ENCODE measurements at regions of chr5 and their contacts with region 1.

Region 1: DNA sequence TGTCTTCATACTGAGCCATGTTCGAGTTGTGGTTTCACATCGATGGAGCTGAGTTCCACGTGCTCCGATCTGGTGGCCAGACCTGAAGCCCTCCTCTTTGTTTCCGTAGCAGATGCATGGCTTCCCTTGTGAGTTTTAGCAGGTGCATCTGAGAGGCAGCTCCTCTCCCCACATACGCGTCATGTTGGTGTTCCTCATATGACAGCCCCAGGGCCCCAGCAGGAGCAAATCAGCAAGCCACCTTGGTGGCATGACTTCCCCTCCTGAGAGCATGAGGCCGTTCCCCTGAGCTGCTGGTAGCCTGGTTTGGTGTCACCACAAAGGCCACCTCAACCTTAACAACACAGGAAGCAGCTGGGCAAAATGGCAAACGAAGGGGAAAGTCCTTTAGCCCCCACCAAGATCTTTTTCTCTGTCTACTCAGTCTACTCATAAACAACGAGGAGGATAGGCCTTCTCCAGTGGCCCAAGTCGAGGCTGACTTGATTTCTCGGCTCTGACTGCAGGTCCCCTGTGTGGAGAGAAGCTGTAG is 5.9 kb downstream of the CYFIP2 start:
- DNase-seq: peak; percentile 94
- H3K4me3 Mint-ChIP-seq: peak overlapping the region; percentile 69
- H3K27ac Mint-ChIP-seq: peak overlapping the region; percentile 97
- H3K4me1 Mint-ChIP-seq: peaks cover 86% of the 10 kb centered on the region
- H3K27me3 Mint-ChIP-seq: no peaks in the 10 kb centered on the region

Region 2: DNA sequence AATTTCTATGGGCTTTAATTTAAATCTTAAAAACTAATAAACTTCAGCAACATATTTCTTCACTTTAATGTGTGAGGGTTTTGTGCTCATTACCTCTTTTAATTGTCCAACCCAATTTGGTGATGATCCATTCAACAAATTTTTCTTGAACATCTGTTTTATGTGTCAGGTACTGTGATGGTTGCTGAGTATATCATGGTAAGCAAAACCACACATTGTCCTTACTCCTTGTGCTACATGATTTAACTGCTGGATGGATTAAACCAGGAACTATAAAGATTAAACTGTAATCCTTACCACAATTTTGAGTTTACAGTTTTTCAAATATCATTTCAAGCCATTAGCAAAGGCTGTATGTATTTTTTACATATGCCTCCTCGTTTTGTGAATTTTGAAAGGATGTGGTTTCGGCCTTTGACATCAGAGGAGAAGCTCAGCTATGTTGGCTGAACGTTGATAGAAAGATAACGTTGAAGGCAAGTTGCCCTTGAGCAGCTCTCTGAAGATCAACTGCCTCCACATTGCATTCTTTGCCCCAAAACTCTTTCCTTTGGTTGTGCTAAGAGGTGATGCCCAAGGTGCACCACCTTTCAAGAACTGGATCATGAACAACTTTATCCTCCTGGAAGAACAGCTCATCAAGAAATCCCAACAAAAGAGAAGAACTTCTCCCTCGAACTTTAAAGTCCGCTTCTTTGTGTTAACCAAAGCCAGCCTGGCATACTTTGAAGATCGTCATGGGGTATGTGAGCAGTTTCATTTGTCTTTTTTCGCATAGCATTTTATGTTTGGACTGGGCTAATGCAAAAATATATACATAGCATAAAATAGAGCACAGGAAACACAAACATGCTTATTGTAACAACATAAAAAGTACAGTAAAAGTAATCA is 91.2 kb before region 1 on chr5 and contains the start of gene ITK:
- CTCF ChIA-PET with region 1: no interaction called
- POLR2A ChIA-PET with region 1: interaction called, 25 read pairs
- intact Hi-C with region 1: no loop called
- DNase-seq: peak; percentile 58
- H3K4me3 Mint-ChIP-seq: peak within 1 kb of the TSS; percentile 99
- H3K27ac Mint-ChIP-seq: peak within 1 kb of the TSS; percentile 100
- H3K4me1 Mint-ChIP-seq: peaks cover 45% of the 10 kb centered on the region
- H3K27me3 Mint-ChIP-seq: no peaks in the 10 kb centered on the region
- total RNA-seq, gene ITK: 236 to 240 TPM

Region 3: DNA sequence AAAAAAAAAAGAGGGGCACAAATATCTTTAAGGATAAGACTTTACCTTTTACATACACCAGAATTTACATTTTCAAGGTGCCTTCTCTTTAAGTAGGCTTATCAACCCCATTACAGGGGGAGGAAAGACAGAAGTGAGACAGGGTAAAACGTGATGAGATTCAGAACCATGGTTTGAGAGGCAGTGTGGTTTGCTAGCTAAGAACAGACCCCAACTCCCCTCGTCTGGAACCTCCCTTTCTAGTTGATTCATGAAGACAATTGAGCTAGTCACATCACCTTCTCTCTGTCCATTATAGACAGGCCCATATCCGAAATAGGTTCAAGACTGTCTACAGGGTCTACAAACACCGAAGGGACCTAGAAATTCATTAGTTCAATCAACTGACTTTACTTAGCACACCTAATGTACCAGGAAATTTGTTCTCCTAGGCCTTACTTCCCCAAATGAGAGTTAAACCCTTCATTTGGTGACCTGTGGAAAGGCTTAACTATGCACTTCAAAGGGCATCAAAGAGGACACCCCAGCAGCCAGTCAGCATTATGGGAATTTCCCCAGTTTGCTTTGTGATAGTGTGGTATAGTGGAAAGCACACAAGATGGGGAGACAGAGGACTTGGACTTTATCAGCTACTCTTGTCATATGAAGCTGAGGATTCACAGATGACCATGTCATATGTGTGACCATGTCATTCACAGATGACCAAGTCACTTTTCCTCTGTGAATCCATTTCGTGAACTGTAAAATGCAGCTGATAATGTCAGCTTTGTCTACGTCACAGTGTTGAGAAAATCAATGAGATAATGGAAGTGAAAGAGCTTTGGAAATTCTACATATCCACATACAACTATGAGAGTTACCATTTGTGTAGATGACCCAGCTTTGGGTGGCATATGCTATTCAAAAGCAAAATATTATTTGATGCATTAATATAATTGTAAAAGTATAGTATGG is 46.1 kb before region 1 on chr5:
- CTCF ChIA-PET with region 1: no interaction called
- POLR2A ChIA-PET with region 1: interaction called, 14 read pairs
- intact Hi-C with region 1: loop called (anchors 1 kb)
- DNase-seq: peak; percentile 52
- H3K4me3 Mint-ChIP-seq: peak overlapping the region; percentile 81
- H3K27ac Mint-ChIP-seq: peak overlapping the region; percentile 96
- H3K4me1 Mint-ChIP-seq: peaks cover 76% of the 10 kb centered on the region
- H3K27me3 Mint-ChIP-seq: no peaks in the 10 kb centered on the region

Region 4: DNA sequence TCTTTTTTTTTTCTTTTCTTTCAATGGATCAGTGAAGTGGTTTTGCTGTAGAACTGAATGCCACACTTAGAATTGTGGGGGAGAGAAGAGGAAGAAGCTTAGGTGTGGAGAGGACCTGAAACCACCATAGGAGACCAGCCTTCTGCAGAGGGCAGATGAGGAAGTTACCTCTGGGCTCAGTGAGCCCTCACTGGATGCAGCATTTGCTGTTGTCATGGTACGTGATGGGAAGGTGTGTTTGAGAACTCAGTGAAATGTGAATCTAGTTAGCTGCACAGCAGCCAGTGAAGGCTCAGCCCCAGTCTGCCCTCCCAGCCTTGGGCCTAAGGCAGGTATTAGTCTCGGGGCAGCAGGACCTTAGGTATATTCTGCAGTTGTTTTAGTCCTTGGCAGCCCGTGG is 11.6 kb after region 1 on chr5:
- CTCF ChIA-PET with region 1: interaction called, 5 read pairs
- POLR2A ChIA-PET with region 1: interaction called, 7 read pairs
- intact Hi-C with region 1: loop called (anchors 1 kb)
- DNase-seq: peak; percentile 25
- H3K4me3 Mint-ChIP-seq: no peak overlapping the region
- H3K27ac Mint-ChIP-seq: peak overlapping the region; percentile 77
- H3K4me1 Mint-ChIP-seq: peaks cover 83% of the 10 kb centered on the region
- H3K27me3 Mint-ChIP-seq: no peaks in the 10 kb centered on the region

Region 5: DNA sequence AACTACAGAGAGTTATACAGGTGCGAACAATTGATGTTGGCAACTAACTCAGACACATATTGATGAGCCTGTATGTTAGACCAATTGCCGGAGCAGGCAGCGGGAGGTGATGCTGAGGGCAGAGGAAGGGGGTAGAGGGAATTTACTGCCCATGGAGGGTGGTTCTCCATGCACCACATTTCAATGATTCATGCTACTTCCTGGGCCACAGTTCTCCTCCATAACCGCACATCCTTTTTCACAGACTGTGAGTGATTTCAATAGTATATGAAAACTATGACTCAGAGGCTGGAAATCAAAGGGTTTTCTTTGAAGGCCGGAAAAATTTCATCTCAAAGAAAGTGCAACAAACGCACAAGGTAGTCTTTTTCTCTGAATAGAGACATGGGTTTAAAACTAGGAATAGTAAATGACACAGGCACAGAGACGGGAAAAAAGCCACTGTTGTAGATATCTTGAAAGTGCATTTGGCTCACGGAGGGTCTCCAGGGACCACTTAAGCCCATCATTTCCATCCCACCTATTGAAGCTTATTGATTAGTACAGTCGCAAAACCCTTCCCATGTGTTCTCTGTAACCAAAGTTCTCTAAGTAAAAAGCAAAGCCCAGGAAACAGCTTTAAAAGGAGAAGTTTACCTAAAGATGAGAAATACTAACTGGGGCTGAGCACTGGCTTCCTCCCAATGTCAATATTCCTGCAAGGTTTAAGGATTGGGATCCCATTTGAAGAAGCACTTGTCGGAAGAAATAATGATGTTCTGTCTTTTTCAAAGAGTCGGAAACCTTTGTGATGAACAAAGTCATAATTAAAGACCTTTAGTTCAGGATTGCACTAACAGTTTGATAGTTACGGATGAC is 331.8 kb after region 1 on chr5:
- CTCF ChIA-PET with region 1: no interaction called
- POLR2A ChIA-PET with region 1: interaction called, 4 read pairs
- intact Hi-C with region 1: loop called (anchors 2 kb)
- DNase-seq: peak; percentile 83
- H3K4me3 Mint-ChIP-seq: peak overlapping the region; percentile 18
- H3K27ac Mint-ChIP-seq: peak overlapping the region; percentile 90
- H3K4me1 Mint-ChIP-seq: peaks cover 93% of the 10 kb centered on the region
- H3K27me3 Mint-ChIP-seq: no peaks in the 10 kb centered on the region

Measured in activated CD4-positive, alpha-beta memory T cell treated with anti-CD3 and anti-CD28 coated beads for 36 hours (primary cell).